GM12878 (cell line): ENCODE measurements at regions of chr4 and their contacts with region 1.

Region 1: GRCh38 chr4:113289766-113290165 is 240.3 kb downstream of the ANK2 start:
- DNase-seq: no peak
- ATAC-seq: no peak
- H3K4me3 ChIP-seq: no peak overlapping the region
- H3K27ac ChIP-seq: no peak overlapping the region
- H3K4me1 ChIP-seq: no peaks in the 10 kb centered on the region
- H3K27me3 ChIP-seq: no peaks in the 10 kb centered on the region
- CTCF ChIP-seq: no peak
- EP300 ChIP-seq: no peak
- POLR2A ChIP-seq: no peak
- RAD21 ChIP-seq: no peak

Region 2: GRCh38 chr4:113303315-113303714 is 13.5 kb after region 1 on chr4:
- CTCF ChIA-PET with region 1: interaction called, 10 read pairs
- POLR2A ChIA-PET with region 1: no interaction called
- RAD21 ChIA-PET with region 1: no interaction called
- SMC1A ChIA-PET with region 1: interaction called, 5 read pairs
- in situ Hi-C with region 1: no loop called
- intact Hi-C with region 1: no loop called
- DNase-seq: no peak
- ATAC-seq: no peak
- H3K4me3 ChIP-seq: no peak overlapping the region
- H3K27ac ChIP-seq: no peak overlapping the region
- H3K4me1 ChIP-seq: no peaks in the 10 kb centered on the region
- H3K27me3 ChIP-seq: no peaks in the 10 kb centered on the region
- CTCF ChIP-seq: no peak
- EP300 ChIP-seq: no peak
- POLR2A ChIP-seq: no peak
- RAD21 ChIP-seq: no peak